ENCODE measurements at regions of chr6 and their contacts with region 1.

Region 1: GRCh38 chr6:128499079-128499731 is 21.2 kb downstream of the PTPRK start:
- DNase-seq: no peak
- H3K4me3 Mint-ChIP-seq: peak overlapping the region; percentile 58
- H3K27ac Mint-ChIP-seq: peak overlapping the region; percentile 90
- H3K4me1 Mint-ChIP-seq: peaks cover 68% of the 10 kb centered on the region
- H3K27me3 Mint-ChIP-seq: no peaks in the 10 kb centered on the region
- CTCF ChIP-seq: no peak

Region 2: DNA sequence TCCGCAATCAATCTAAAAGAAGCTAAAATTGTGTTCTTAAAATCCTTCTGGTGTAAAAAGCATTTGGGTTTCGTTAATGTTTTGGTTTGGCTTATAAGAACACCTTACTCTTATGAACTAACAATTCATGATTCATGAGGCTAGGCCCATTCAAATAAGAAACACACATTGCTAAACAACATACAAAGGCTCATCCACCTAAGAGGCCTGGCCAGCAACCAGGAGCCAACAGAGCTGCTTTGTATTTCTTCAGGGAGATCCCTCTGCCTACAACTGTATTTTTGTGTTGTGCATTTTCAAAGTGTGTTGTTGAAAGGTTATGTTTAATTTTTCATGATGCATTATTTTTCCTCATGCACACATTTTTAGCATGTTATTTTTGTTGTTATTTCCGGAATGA is 77.4 kb before region 1 on chr6:
- CTCF ChIA-PET with region 1: no interaction called
- intact Hi-C with region 1: no loop called
- DNase-seq: no peak
- H3K4me3 Mint-ChIP-seq: no peak overlapping the region
- H3K27ac Mint-ChIP-seq: peak overlapping the region; percentile 53
- H3K4me1 Mint-ChIP-seq: peaks cover 57% of the 10 kb centered on the region
- H3K27me3 Mint-ChIP-seq: no peaks in the 10 kb centered on the region
- CTCF ChIP-seq: no peak

Region 3: DNA sequence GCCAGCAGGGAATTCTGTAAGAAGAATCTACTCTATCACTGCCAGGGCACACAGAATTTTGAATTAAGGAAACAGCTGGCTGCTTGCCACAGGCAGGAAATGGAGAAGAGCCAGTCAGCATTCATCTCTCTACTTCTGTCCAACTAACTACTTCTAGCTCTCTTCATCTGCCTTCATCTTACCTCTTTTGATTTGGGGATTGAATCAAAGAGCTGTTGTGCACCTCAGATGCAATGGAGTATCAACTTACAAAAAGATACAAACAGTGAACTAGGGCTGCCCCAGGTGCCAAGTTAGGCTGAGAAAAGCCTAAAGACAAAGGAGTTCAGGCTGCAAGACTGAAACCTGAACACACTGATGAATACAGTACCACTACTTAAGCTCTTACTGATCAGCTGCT is 60.8 kb before region 1 on chr6:
- CTCF ChIA-PET with region 1: no interaction called
- intact Hi-C with region 1: no loop called
- DNase-seq: no peak
- H3K4me3 Mint-ChIP-seq: no peak overlapping the region
- H3K27ac Mint-ChIP-seq: no peak overlapping the region
- H3K4me1 Mint-ChIP-seq: peaks cover 44% of the 10 kb centered on the region
- H3K27me3 Mint-ChIP-seq: no peaks in the 10 kb centered on the region
- CTCF ChIP-seq: no peak

Region 4: GRCh38 chr6:128463942-128464341 is 35.3 kb before region 1 on chr6:
- CTCF ChIA-PET with region 1: no interaction called
- intact Hi-C with region 1: loop called (anchors 5 kb)
- DNase-seq: no peak
- H3K4me3 Mint-ChIP-seq: peak overlapping the region; percentile 40
- H3K27ac Mint-ChIP-seq: peak overlapping the region; percentile 83
- H3K4me1 Mint-ChIP-seq: peaks cover 68% of the 10 kb centered on the region
- H3K27me3 Mint-ChIP-seq: no peaks in the 10 kb centered on the region
- CTCF ChIP-seq: no peak

Measured in Calu3 (cell line).